Activated CD8-positive, alpha-beta T cell treated with anti-CD3 and anti-CD28 coated beads for 36 hours (primary cell): ENCODE measurements at regions of chr17 and their contacts with region 1.

Region 1: GRCh38 chr17:18141210-18141803 is 32.8 kb downstream of the MYO15A start:
- DNase-seq: peak; percentile 66
- ATAC-seq: peak; percentile 74
- H3K4me3 Mint-ChIP-seq: no peak overlapping the region
- H3K27ac Mint-ChIP-seq: no peak overlapping the region
- H3K4me1 Mint-ChIP-seq: no peaks in the 10 kb centered on the region
- H3K27me3 Mint-ChIP-seq: no peaks in the 10 kb centered on the region
- CTCF ChIP-seq: peak; percentile 73

Region 2: GRCh38 chr17:18153749-18154161 is 12.4 kb after region 1 on chr17:
- CTCF ChIA-PET with region 1: interaction called, 24 read pairs
- POLR2A ChIA-PET with region 1: interaction called, 4 read pairs
- intact Hi-C with region 1: no loop called
- DNase-seq: peak; percentile 73
- ATAC-seq: peak; percentile 72
- H3K4me3 Mint-ChIP-seq: peak overlapping the region; percentile 74
- H3K27ac Mint-ChIP-seq: no peak overlapping the region
- H3K4me1 Mint-ChIP-seq: peaks cover 21% of the 10 kb centered on the region
- H3K27me3 Mint-ChIP-seq: peaks cover 2% of the 10 kb centered on the region
- CTCF ChIP-seq: no peak

Region 3: GRCh38 chr17:18183334-18184142 is 42.2 kb after region 1 on chr17 and contains the start of gene ALKBH5:
- CTCF ChIA-PET with region 1: interaction called, 69 read pairs
- POLR2A ChIA-PET with region 1: interaction called, 3 read pairs
- intact Hi-C with region 1: loop called (anchors 2 kb)
- DNase-seq: peak; percentile 98
- ATAC-seq: peak; percentile 86
- H3K4me3 Mint-ChIP-seq: peak within 1 kb of the TSS; percentile 96
- H3K27ac Mint-ChIP-seq: peak within 1 kb of the TSS; percentile 98
- H3K4me1 Mint-ChIP-seq: peaks cover 49% of the 10 kb centered on the region
- H3K27me3 Mint-ChIP-seq: no peaks in the 10 kb centered on the region
- CTCF ChIP-seq: peak; percentile 57
- total RNA-seq, gene ALKBH5: 213 to 217 TPM

Region 4: GRCh38 chr17:18191967-18192366 is 50.7 kb after region 1 on chr17:
- CTCF ChIA-PET with region 1: interaction called, 43 read pairs
- POLR2A ChIA-PET with region 1: no interaction called
- intact Hi-C with region 1: loop called (anchors 2 kb)
- DNase-seq: peak; percentile 24
- ATAC-seq: peak; percentile 38
- H3K4me3 Mint-ChIP-seq: no peak overlapping the region
- H3K27ac Mint-ChIP-seq: no peak overlapping the region
- H3K4me1 Mint-ChIP-seq: peaks cover 74% of the 10 kb centered on the region
- H3K27me3 Mint-ChIP-seq: no peaks in the 10 kb centered on the region
- CTCF ChIP-seq: no peak

Region 5: DNA sequence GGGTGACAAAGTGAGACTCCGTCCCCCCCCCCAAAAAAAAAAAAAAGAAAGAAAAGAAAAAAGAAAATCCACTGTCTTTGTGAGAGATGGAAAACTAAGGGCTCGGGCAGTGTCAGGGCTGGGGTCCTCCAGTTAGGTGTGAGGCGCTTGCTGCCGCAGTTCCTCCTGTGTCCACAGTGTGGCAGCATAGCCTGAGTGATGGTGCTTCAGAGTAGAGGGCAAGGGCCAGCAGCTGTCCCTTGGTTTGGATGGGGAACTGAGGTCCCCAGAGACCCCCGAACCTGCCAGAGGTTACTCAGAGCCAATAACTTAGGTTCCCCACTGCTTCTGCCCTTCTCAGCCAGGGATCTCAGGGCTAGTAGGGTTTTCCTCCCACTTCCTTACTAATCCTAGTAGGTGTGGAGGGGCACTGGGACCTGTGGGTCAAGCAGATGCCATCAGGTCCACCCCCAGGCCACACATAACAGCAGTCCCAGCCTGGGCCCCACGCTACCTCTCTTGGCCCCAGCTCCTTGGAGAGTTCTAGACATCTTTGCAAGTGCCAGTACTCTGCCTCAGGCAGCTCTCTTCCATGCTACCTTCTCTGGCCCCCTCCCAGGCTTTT is 76.2 kb after region 1 on chr17:
- CTCF ChIA-PET with region 1: interaction called, 24 read pairs
- POLR2A ChIA-PET with region 1: no interaction called
- intact Hi-C with region 1: loop called (anchors 2 kb)
- DNase-seq: peak; percentile 86
- ATAC-seq: peak; percentile 95
- H3K4me3 Mint-ChIP-seq: no peak overlapping the region
- H3K27ac Mint-ChIP-seq: no peak overlapping the region
- H3K4me1 Mint-ChIP-seq: no peaks in the 10 kb centered on the region
- H3K27me3 Mint-ChIP-seq: no peaks in the 10 kb centered on the region
- CTCF ChIP-seq: peak; percentile 94